ENCODE measurements at regions of chr3 and their contacts with region 1.

Region 1: GRCh38 chr3:126259411-126260391 is 79.3 kb upstream of the ALDH1L1 start:
- DNase-seq: peak in 3 of 5 donors; percentile 52 to 69 (median 62)
- H3K4me3 ChIP-seq: peak overlapping the region in 2 of 3 donors; percentile 10 to 38
- H3K27ac ChIP-seq: no peak overlapping the region
- H3K4me1 ChIP-seq: peaks cover 0 to 3% (median 0%) of the 10 kb centered on the region in 3 donors
- H3K27me3 ChIP-seq: no peaks in the 10 kb centered on the region
- CTCF ChIP-seq: peak; percentile 73

Region 2: DNA sequence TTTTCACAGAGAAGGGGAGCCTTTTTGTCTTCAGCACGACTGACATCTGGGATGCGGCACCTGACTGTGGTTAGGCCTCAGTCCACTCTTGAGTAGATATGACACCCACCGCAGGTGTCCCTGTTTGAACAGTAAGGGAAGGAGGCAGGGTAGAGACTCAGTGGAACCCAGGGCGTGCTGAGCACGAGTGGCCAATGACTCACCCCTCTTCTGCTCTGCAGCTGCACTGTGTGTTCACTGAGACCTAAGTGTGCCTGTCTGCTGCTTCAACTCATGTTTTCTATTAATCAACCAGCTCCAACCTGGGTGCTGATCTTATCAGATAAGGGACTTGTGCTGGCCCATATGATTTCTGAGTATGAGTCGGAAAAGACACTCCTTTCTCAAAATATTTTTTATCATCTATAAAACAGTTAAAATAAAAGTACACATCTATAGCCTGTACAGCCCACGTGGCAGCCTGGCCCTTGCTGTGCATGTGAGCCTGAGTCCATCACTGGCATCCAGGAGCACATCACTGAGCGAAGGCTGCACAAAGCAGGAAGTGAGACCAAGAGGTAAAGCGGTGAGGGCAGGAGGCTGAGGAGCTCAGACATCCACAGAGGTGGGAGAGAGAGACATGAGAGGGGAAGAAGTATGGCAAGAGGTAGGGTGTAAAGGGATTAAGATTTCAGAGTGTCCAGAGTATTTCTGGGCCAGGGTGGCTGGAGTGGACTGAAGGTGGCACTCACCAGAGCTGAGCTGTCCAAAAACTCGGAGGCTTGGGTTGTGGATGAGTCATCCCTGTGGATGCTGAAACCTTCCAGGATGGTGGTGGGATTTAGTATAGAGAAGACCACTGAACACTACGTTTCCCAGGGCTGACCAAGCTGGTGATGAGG is 225.0 kb before region 1 on chr3:
- intact Hi-C with region 1: no loop called
- DNase-seq: peak in 2 of 5 donors; percentile 3 to 4
- H3K4me3 ChIP-seq: no peak overlapping the region
- H3K27ac ChIP-seq: no peak overlapping the region
- H3K4me1 ChIP-seq: no peaks in the 10 kb centered on the region
- H3K27me3 ChIP-seq: no peaks in the 10 kb centered on the region
- CTCF ChIP-seq: no peak

Region 3: GRCh38 chr3:126394575-126395228 is 135.0 kb after region 1 on chr3 and contains the start of gene CFAP100:
- intact Hi-C with region 1: loop called (anchors 10 kb)
- DNase-seq: peak; percentile 70 to 91 (median 85)
- H3K4me3 ChIP-seq: peak within 1 kb of the TSS in 1 of 3 donors; percentile 1
- H3K27ac ChIP-seq: no peak within 1 kb of the TSS
- H3K4me1 ChIP-seq: no peaks in the 10 kb centered on the region
- H3K27me3 ChIP-seq: no peaks in the 10 kb centered on the region
- CTCF ChIP-seq: no peak
- total RNA-seq, gene CFAP100: not detected